ENCODE measurements at regions of chr12 and their contacts with region 1.

Region 1: GRCh38 chr12:122054842-122055520 is 23.6 kb upstream of the MLXIP start:
- DNase-seq: no peak
- H3K4me3 Mint-ChIP-seq: no peak overlapping the region
- H3K27ac Mint-ChIP-seq: no peak overlapping the region
- H3K4me1 Mint-ChIP-seq: peaks cover 6% of the 10 kb centered on the region
- H3K27me3 Mint-ChIP-seq: no peaks in the 10 kb centered on the region

Region 2: GRCh38 chr12:122123051-122123760 is 68.2 kb after region 1 on chr12:
- intact Hi-C with region 1: loop called (anchors 1 kb)
- DNase-seq: peak; percentile 92
- H3K4me3 Mint-ChIP-seq: no peak overlapping the region
- H3K27ac Mint-ChIP-seq: no peak overlapping the region
- H3K4me1 Mint-ChIP-seq: peaks cover 20% of the 10 kb centered on the region
- H3K27me3 Mint-ChIP-seq: no peaks in the 10 kb centered on the region

Region 3: DNA sequence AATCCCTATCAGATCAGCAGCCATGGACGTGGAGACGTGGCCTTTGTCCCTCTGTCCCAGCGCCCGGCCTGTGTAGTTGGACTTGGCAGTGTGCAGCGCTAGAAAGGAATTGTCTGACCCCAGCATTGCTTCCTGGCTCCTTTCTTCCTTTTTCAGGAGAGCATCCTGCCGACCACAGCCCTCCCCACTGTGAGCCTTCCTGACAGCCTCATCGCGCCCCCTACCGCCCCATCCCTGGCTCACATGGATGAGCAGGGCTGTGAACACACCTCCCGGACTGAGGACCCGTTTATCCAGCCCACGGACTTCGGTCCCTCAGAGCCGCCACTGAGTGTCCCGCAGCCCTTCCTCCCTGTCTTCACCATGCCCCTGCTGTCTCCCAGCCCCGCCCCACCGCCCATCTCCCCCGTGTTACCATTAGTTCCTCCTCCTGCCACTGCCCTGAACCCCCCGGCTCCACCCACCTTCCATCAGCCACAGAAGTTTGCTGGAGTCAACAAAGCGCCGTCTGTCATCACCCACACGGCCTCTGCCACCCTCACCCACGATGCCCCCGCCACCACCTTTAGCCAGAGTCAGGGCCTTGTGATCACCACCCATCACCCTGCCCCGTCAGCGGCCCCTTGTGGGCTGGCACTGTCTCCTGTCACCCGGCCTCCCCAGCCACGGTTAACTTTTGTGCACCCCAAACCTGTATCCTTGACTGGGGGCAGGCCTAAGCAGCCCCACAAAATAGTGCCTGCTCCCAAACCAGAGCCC is 78.4 kb after region 1 on chr12:
- intact Hi-C with region 1: no loop called
- DNase-seq: no peak
- H3K4me3 Mint-ChIP-seq: no peak overlapping the region
- H3K27ac Mint-ChIP-seq: no peak overlapping the region
- H3K4me1 Mint-ChIP-seq: no peaks in the 10 kb centered on the region
- H3K27me3 Mint-ChIP-seq: no peaks in the 10 kb centered on the region

Measured in activated CD4-positive, alpha-beta T cell treated with anti-CD3 and anti-CD28 coated beads, Interleukin-2, amount 10 ng/mL, durations not matched to agents 24 days and 14 days (primary cell).